ENCODE measurements at regions of chr7 and their contacts with region 1.

Region 1: DNA sequence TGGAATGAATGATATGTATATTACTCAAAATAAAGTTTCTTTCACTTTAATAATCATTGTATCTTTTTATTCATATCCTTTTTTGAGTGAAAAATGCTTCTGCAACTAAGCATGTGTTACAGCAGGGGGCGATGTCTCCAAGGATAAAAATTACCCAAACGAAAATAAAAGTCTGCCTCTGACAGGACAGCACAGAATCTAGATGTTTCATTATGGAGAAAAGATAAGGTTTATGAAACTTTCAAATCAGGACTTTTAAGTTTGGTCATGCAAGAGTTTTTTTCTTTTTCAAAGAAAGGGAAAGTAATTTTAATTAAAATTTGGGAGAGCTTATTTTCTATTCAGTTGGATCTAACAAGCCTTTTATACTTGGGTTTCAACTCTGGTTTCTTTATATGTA is 48.4 kb downstream of the TES start:
- DNase-seq: peak in 5 of 14 experiments; percentile 16 to 71 (median 56)
- ATAC-seq: peak; percentile 76
- H3K4me3 ChIP-seq: no peak overlapping the region
- H3K4me3 Mint-ChIP-seq: no peak overlapping the region
- H3K27ac ChIP-seq: no peak overlapping the region
- H3K27ac Mint-ChIP-seq: peak overlapping the region; percentile 61
- H3K4me1 ChIP-seq: no peaks in the 10 kb centered on the region
- H3K4me1 Mint-ChIP-seq: peaks cover 20% of the 10 kb centered on the region
- H3K27me3 ChIP-seq: no peaks in the 10 kb centered on the region
- H3K27me3 Mint-ChIP-seq: no peaks in the 10 kb centered on the region
- CTCF ChIP-seq: peak; percentile 77

Region 2: GRCh38 chr7:116380025-116380424 is 121.3 kb after region 1 on chr7:
- CTCF ChIA-PET with region 1: no interaction called
- POLR2A ChIA-PET with region 1: no interaction called
- intact Hi-C with region 1: no loop called
- DNase-seq: no peak
- ATAC-seq: no peak
- H3K4me3 ChIP-seq: no peak overlapping the region
- H3K4me3 Mint-ChIP-seq: no peak overlapping the region
- H3K27ac ChIP-seq: no peak overlapping the region
- H3K27ac Mint-ChIP-seq: no peak overlapping the region
- H3K4me1 ChIP-seq: no peaks in the 10 kb centered on the region
- H3K4me1 Mint-ChIP-seq: no peaks in the 10 kb centered on the region
- H3K27me3 ChIP-seq: peaks cover 0 to under 1% of the 10 kb centered on the region in 2 experiments
- H3K27me3 Mint-ChIP-seq: no peaks in the 10 kb centered on the region
- CTCF ChIP-seq: no peak

Region 3: GRCh38 chr7:116525913-116526861 is 267.5 kb after region 1 on chr7:
- CTCF ChIA-PET with region 1: no interaction called
- POLR2A ChIA-PET with region 1: no interaction called
- intact Hi-C with region 1: loop called (anchors 2 to 5 kb)
- DNase-seq: peak; percentile 27 to 80 (median 50)
- ATAC-seq: peak; percentile 92
- H3K4me3 ChIP-seq: peak overlapping the region; percentile 52
- H3K4me3 Mint-ChIP-seq: peak overlapping the region; percentile 83
- H3K27ac ChIP-seq: no peak overlapping the region
- H3K27ac Mint-ChIP-seq: no peak overlapping the region
- H3K4me1 ChIP-seq: peaks cover 24% of the 10 kb centered on the region
- H3K4me1 Mint-ChIP-seq: peaks cover 20% of the 10 kb centered on the region
- H3K27me3 ChIP-seq: peaks cover 49 to 57% of the 10 kb centered on the region in 2 experiments
- H3K27me3 Mint-ChIP-seq: peaks cover 91% of the 10 kb centered on the region
- CTCF ChIP-seq: peak; percentile 61

Region 4: DNA sequence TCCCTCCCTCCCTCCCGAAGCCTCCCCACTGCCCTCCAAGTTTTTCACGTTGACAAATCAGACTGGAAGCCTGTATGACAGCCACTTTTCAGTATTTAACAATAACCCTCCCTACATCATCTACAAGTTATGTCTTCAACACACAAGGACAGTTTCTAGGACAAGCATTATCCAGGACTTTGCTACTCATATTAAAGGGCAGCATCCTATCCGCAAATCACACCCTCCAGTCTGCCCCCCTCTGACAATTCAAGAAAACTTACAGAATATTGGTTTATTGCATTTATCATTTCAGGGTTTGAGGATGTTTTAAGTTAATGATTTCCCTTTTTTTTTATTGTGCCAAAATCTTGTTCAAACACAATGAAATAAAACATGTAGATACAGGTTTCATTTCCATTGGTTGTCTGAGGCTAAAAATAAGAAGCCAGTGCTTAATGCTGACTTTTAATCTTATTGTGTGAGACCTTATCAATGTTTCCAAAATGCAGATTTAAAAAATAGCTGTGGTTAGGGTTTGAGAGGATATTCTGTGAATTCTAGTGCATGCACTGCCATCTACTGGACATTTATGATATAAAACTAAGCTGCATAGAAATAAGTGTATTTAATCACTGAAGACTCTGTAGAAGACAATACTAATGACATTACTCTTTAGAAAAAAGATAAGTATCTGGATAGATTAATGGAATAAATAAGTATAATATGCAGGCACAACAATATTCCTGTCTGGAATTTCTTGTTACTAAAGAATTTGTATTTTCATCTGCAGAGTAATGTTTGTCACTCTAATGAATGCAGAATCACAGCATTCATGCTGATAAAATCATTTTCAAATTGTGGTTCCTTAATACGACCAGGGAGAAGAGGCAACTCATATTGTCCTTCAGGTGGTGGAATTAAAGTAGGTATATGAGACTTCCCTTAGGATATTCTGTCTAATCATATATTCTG is 330.2 kb after region 1 on chr7:
- CTCF ChIA-PET with region 1: interaction called, 11 read pairs
- POLR2A ChIA-PET with region 1: no interaction called
- intact Hi-C with region 1: loop called (anchors 1 to 2 kb)
- DNase-seq: peak in 3 of 14 experiments; percentile 46 to 61 (median 57)
- ATAC-seq: no peak
- H3K4me3 ChIP-seq: no peak overlapping the region
- H3K4me3 Mint-ChIP-seq: no peak overlapping the region
- H3K27ac ChIP-seq: no peak overlapping the region
- H3K27ac Mint-ChIP-seq: no peak overlapping the region
- H3K4me1 ChIP-seq: peaks cover 6% of the 10 kb centered on the region
- H3K4me1 Mint-ChIP-seq: peaks cover 22% of the 10 kb centered on the region
- H3K27me3 ChIP-seq: peaks cover 0 to 26% of the 10 kb centered on the region in 2 experiments
- H3K27me3 Mint-ChIP-seq: peaks cover 25% of the 10 kb centered on the region
- CTCF ChIP-seq: peak; percentile 95

Region 5: DNA sequence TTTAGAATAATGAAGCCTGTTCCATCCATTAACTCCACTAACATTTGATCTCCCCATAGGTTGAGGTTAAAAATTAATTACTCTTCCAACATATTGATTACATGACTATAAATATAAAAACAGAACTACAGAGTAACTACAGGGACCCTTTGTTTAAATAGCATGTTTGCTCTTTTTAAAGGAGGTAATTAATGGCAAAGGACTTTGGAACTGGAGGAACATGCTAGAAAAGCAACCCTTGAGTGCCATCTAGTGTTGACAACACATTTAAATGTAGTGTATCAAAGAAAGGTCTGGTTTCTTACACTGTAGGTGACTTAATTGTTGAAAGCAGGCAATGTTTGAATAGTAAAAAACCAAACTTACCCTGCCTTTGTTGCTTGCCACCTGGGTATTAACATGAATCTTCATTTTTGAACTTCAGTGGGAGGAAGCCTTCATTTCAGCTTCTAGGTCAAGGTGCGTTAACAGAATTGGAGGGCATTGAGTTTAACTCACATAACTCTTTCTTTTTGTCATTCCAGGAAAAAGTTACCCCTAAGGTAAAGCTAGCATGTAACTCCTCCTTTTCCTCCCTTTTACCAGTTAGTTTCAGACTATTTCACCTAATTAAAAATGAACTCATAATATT is 551.0 kb after region 1 on chr7:
- CTCF ChIA-PET with region 1: no interaction called
- POLR2A ChIA-PET with region 1: no interaction called
- intact Hi-C with region 1: loop called in 1 of 2 experiments (anchors 1 kb)
- DNase-seq: peak in 4 of 14 experiments; percentile 7 to 62 (median 54)
- ATAC-seq: peak; percentile 48
- H3K4me3 ChIP-seq: no peak overlapping the region
- H3K4me3 Mint-ChIP-seq: no peak overlapping the region
- H3K27ac ChIP-seq: no peak overlapping the region
- H3K27ac Mint-ChIP-seq: no peak overlapping the region
- H3K4me1 ChIP-seq: no peaks in the 10 kb centered on the region
- H3K4me1 Mint-ChIP-seq: no peaks in the 10 kb centered on the region
- H3K27me3 ChIP-seq: no peaks in the 10 kb centered on the region
- H3K27me3 Mint-ChIP-seq: no peaks in the 10 kb centered on the region
- CTCF ChIP-seq: peak; percentile 69